Left colon (tissue), 2 donors: ENCODE measurements at regions of chr5 and their contacts with region 1.

Region 1: DNA sequence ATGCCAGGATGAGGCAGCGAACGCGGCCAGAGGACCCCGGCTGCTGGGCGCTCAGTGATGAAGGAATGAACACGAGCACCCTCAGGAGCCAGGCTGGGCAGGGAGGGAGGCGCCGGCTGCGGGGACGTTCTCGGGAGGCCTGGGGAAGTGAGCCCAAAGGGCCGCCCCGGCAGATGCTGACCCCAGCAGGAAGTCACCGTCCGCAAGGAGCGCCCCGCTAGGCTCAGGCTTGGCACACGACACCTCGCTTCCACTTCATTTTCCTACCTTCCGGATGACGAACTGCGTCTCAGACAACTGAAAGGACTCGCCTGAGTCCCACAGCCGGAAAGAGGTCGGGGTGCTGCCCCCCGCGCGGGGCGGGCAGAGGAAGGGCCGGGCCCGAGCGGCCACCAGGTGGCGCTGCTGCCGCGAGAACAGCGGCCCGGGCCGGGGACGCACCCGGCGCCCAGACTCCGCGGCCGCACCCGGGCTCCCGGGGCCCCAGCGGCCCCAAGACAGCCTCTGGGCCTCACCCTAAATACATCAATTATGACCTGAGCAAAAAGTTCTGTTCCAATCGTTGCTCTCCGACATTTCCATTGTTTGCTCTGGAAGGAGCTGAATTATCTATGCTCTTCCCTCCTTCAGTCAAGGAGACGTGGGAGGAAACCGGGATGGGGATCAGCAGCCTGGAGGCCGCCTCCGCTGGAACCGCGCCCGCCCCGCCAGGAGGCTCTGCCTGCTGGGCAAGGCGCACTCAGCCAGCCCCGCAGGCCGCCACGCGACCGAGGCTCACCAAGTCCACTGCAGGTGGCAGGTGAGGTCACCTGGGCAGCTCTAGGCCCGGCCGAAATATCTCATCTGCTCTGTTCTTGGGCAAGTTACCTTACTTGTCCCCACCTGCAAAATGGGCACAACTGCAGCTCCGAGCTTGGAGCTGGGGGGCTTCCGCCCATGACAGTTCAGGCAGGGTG is 107.0 kb downstream of the ZNF354C start:
- DNase-seq: peak in 1 of 2 donors; percentile 46
- ATAC-seq: peak; percentile 72

Region 2: GRCh38 chr5:179345433-179346321 is 178.5 kb after region 1 on chr5 and contains the start of gene ADAMTS2:
- intact Hi-C with region 1: loop called in 1 of 2 experiments (anchors 10 kb)
- DNase-seq: peak in 1 of 2 donors; percentile 39
- ATAC-seq: no peak
- total RNA-seq, gene ADAMTS2: 2.6 to 4.4 TPM

Region 3: DNA sequence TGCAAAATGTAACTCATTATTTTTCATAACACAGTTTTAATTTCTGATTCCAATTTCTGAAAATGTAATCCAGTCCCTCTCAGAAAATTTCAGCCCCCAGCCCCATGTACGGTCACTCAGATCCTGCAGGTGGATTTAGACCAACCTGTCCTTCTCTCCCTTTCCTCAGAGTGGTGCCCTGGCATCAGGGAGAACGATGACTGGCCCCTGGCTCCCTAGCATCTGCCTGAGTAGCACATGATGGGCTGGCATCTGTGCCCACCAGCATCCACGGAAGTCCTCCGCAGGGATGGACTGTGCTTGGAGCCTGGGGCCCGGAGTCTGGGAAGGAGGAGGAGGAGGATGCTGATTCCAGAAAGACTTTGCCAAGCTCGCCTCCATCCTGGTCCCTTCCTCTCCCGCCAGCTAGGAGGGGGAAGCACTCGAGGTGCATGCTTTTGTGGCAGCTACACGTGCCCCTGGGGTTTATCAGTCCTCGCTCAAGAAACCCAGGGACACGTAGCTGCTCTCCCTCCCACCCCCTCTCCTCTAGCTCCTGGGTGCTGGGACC is 328.8 kb after region 1 on chr5:
- intact Hi-C with region 1: loop called (anchors 2 to 5 kb)
- DNase-seq: no peak
- ATAC-seq: no peak